ENCODE measurements at regions of chr3 and their contacts with region 1.

Region 1: DNA sequence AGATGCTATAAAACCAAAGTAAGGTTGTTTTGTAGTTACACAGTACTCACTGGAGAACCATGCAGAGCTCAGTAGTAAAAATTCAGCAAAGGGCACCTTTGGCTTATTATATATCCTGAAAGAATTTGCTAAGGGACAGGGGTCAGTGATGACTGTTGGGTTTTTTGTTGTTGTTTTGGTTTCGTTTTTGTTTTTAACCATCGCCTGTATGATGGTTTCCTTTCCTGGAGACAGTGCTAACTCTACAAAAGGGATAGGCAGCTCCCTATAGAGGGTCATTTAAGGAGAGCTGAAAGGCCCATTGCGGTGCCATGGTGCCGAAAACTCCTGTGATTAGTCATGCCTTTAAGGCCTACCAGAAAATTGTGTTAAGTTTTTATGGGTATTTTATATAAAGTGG is 118.2 kb upstream of the GOLIM4 start:
- DNase-seq: peak; percentile 33
- CTCF ChIP-seq: no peak

Region 2: GRCh38 chr3:168476360-168476980 is 262.6 kb after region 1 on chr3:
- in situ Hi-C with region 1: loop called (anchors 10 kb)
- DNase-seq: no peak
- CTCF ChIP-seq: no peak

Region 3: GRCh38 chr3:168624892-168625448 is 411.1 kb after region 1 on chr3:
- in situ Hi-C with region 1: no loop called
- DNase-seq: no peak
- CTCF ChIP-seq: no peak

Region 4: GRCh38 chr3:168865022-168865551 is 651.2 kb after region 1 on chr3:
- in situ Hi-C with region 1: loop called (anchors 25 kb)
- DNase-seq: no peak
- CTCF ChIP-seq: peak; percentile 48

Region 5: GRCh38 chr3:169149349-169149890 is 935.5 kb after region 1 on chr3:
- in situ Hi-C with region 1: loop called (anchors 25 kb)
- DNase-seq: peak; percentile 83
- CTCF ChIP-seq: peak; percentile 77